Activated CD4-positive, alpha-beta T cell treated with anti-CD3 and anti-CD28 coated beads, Interleukin-2, amount 10 ng/mL, durations not matched to agents 7 days and 5 days (primary cell): ENCODE measurements at regions of chr3 and their contacts with region 1.

Region 1: GRCh38 chr3:188179006-188179966 is 25.3 kb downstream of the LPP start:
- DNase-seq: no peak
- H3K4me3 Mint-ChIP-seq: peak overlapping the region; percentile 5
- H3K27ac Mint-ChIP-seq: peak overlapping the region; percentile 43
- H3K4me1 Mint-ChIP-seq: peaks cover 43% of the 10 kb centered on the region
- H3K27me3 Mint-ChIP-seq: no peaks in the 10 kb centered on the region

Region 2: GRCh38 chr3:188819939-188820338 is 640.7 kb after region 1 on chr3:
- CTCF ChIA-PET with region 1: no interaction called
- POLR2A ChIA-PET with region 1: interaction called, 15 read pairs
- DNase-seq: no peak
- H3K4me3 Mint-ChIP-seq: no peak overlapping the region
- H3K27ac Mint-ChIP-seq: no peak overlapping the region
- H3K4me1 Mint-ChIP-seq: no peaks in the 10 kb centered on the region
- H3K27me3 Mint-ChIP-seq: no peaks in the 10 kb centered on the region